ENCODE measurements at regions of chrX and their contacts with region 1.

Region 1: GRCh38 chrX:104253567-104254441 is 929 bp downstream of the ESX1 start:
- DNase-seq: peak; percentile 48
- ATAC-seq: peak; percentile 46
- H3K4me3 Mint-ChIP-seq: peak overlapping the region; percentile 73
- H3K27ac Mint-ChIP-seq: no peak overlapping the region
- H3K4me1 Mint-ChIP-seq: peaks cover 14% of the 10 kb centered on the region
- H3K27me3 Mint-ChIP-seq: peaks cover 97% of the 10 kb centered on the region
- CTCF ChIP-seq: no peak

Region 2: GRCh38 chrX:103954259-103954658 is 299.5 kb before region 1 on chrX:
- CTCF ChIA-PET with region 1: no interaction called
- POLR2A ChIA-PET with region 1: no interaction called
- DNase-seq: no peak
- ATAC-seq: no peak
- H3K4me3 Mint-ChIP-seq: no peak overlapping the region
- H3K27ac Mint-ChIP-seq: no peak overlapping the region
- H3K4me1 Mint-ChIP-seq: no peaks in the 10 kb centered on the region
- H3K27me3 Mint-ChIP-seq: peaks cover 14% of the 10 kb centered on the region
- CTCF ChIP-seq: no peak

Region 3: DNA sequence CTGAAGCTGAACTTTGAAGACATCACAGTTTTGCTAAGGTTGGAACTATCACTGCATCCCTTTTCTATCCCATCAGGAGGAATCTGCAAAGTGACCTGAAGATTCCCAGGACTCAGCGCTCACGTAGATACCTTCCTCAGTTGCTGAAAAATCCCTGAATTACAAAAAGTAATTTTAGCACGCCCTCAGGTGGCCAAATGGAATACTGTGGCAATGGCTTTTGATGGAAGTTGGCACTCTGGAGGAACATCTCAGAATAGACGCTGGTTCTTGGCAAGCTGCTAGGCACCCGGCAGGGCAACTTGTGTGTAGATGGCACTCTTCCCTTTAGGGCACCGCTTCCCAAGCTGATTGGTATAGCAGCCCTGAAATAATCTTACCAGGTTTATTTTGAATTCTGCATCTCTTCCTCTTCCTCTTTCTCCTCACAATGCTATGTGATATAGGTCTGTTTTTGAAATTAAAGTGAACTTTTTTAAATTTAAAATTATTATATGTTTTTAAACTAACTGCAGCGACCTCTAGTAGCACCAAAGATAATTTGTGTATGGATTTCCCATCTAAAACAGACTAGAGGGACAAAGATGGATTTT is 17.2 kb after region 1 on chrX:
- CTCF ChIA-PET with region 1: interaction called, 11 read pairs
- POLR2A ChIA-PET with region 1: no interaction called
- DNase-seq: peak; percentile 58
- ATAC-seq: peak; percentile 63
- H3K4me3 Mint-ChIP-seq: no peak overlapping the region
- H3K27ac Mint-ChIP-seq: no peak overlapping the region
- H3K4me1 Mint-ChIP-seq: peaks cover 3% of the 10 kb centered on the region; the same call in 1 of the 2 replicates
- H3K27me3 Mint-ChIP-seq: peaks cover 49% of the 10 kb centered on the region
- CTCF ChIP-seq: no peak

Measured in WTC11 (cell line).